Activated naive CD4-positive, alpha-beta T cell treated with anti-CD3 and anti-CD28 coated beads for 36 hours (primary cell): ENCODE measurements at regions of chr6 and their contacts with region 1.

Region 1: GRCh38 chr6:136846046-136846445 is 23.7 kb downstream of the PEX7 start:
- DNase-seq: peak; percentile 52
- H3K4me3 Mint-ChIP-seq: no peak overlapping the region
- H3K27ac Mint-ChIP-seq: no peak overlapping the region
- H3K4me1 Mint-ChIP-seq: no peaks in the 10 kb centered on the region
- H3K27me3 Mint-ChIP-seq: no peaks in the 10 kb centered on the region

Region 2: DNA sequence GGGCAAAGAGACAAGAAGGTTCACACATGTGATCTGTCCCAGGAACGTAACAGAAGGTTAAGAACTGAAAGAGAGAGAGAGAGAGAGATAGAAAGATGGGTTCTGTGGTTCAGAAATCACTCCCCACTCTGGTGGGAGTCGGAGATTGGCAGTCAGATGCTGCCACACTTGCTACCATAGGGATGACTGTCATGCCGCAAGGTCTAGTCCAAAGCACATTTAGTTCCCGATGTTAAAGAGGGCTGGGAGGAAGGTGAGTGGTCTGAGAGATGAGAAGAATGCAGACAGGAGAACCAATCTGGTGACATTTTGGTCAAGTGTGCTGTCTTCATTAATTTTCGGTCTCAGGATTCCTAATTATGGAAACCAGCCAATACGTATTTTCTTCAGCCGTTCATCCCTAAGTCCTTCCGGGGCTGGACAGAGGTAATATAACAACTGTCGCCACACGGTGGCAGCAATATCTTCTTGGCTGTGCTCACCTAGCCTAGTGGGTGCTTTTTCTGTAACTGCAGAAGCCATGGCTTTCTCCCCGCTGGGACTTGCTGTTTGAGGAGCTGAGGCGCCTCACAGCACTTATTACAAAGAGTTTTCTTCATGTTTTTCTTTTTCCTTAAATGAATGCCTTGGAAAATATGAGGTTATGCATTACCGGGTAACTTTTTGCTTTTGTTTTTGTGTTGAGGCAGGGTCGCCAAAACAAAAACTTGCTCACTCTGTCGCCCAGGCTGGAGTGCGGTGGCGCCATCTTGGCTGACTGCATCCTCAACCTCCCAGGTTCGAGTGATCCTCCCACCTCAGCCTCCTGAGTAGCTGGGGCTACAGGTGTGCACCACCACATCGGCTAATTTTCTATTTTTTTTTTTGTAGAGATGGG is 122.1 kb after region 1 on chr6:
- CTCF ChIA-PET with region 1: interaction called, 4 read pairs
- intact Hi-C with region 1: loop called (anchors 5 kb)
- DNase-seq: peak; percentile 80
- H3K4me3 Mint-ChIP-seq: no peak overlapping the region
- H3K27ac Mint-ChIP-seq: no peak overlapping the region
- H3K4me1 Mint-ChIP-seq: no peaks in the 10 kb centered on the region
- H3K27me3 Mint-ChIP-seq: peaks cover 10% of the 10 kb centered on the region

Region 3: DNA sequence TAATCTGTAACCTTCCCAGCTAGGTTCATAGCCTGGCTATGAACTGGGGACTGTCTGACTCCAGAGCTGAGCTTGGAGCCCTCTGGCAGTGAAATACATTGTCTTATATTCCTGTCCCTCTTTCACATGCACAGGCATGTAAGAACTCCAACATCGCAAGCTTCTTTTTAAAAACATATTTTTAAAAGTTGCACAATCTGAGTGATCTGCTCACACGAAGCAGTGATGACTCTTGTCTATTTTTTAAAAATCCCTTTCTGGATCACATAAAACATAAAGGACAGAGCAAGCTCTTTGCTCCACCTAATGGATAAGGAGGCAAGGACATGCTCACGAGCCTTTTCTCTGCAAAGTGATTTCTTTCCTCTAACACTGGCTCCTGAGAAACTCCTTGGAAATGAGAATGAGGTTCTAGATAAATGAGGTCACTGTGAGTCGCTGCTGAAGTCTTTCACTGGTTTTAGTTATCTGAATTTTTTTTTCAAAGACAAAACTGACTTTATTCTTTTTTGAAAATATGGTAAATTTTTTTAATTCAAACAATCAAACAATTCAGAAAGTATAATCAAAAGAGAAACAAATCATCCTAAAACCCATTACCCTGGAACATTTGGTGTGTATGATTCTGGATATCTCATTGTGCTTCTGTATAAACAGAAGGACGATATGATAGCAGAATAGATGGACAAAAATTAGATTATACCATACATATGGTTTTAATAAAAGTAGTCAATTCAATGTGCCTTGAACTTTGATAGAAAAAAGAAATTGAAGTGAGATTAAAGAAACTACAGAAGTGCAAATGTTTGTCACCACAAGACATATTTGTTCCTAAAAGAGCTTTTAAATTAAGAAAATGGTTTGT is 167.9 kb after region 1 on chr6:
- CTCF ChIA-PET with region 1: no interaction called
- intact Hi-C with region 1: loop called (anchors 5 kb)
- DNase-seq: no peak
- H3K4me3 Mint-ChIP-seq: no peak overlapping the region
- H3K27ac Mint-ChIP-seq: no peak overlapping the region
- H3K4me1 Mint-ChIP-seq: no peaks in the 10 kb centered on the region
- H3K27me3 Mint-ChIP-seq: peaks cover 34% of the 10 kb centered on the region